ENCODE measurements at regions of chr17 and their contacts with region 1.

Region 1: GRCh38 chr17:28763804-28764266 is 20.0 kb downstream of the TRAF4 start:
- DNase-seq: peak; percentile 66

Region 2: DNA sequence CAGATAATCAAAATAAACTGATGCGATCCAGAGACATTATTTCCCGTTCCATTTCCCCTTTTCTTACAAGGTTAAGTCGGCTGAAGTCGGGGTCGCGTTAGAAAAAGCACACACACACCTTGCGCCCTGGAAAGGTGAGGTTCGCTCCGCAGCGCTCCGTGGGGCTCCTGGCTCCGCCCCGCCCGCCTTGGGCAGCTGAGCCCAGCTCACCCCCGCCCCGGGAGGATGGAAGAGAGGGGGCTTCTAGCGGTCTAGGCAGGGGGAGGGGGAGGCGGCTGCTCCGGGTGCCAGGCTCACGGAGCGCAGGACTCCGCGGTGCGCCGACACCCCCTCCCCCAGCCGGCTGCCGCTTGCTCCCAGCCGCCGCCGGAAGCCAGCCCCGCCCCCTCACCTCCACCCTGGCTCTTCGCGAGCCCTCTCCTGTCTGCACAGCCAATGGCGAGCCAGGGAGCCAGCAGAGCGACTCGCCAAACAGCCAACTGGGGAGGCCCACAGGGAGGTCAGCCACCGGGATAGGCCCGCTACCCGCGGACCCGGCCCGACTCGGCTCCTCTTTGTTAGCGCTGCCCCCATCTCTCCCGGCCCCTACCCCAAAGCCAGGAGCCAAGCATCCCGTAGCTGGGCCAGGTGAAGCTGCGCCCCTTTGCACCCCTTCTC is 48.4 kb after region 1 on chr17:
- in situ Hi-C with region 1: loop called (anchors 10 kb)
- DNase-seq: peak; percentile 93

Measured in Caki2 (cell line).